ENCODE measurements at regions of chr5 and their contacts with region 1.

Region 1: DNA sequence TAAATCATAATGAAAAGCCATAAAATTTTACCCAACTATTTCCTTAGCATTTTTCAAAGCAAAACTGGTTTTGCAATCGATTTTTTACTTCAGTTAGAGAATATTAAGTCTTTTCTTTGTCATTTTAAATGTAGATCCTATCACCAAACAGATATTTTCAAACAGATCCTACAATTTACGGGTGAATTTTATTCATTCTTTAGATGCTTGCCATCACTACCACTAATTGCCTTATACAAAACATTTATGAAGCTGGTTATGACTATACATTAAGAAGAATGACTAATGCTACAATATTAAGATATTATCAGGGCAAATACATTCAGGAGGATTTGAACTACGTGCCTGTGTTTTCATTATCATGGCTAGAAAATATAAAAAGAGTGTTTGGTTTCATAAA is 196.9 kb downstream of the CWC27 start:
- DNase-seq: no peak
- ATAC-seq: no peak
- H3K4me3 ChIP-seq: no peak overlapping the region
- H3K27ac ChIP-seq: no peak overlapping the region
- H3K4me1 ChIP-seq: no peaks in the 10 kb centered on the region
- H3K27me3 ChIP-seq: no peaks in the 10 kb centered on the region
- CTCF ChIP-seq: no peak
- POLR2A ChIP-seq: no peak

Region 2: DNA sequence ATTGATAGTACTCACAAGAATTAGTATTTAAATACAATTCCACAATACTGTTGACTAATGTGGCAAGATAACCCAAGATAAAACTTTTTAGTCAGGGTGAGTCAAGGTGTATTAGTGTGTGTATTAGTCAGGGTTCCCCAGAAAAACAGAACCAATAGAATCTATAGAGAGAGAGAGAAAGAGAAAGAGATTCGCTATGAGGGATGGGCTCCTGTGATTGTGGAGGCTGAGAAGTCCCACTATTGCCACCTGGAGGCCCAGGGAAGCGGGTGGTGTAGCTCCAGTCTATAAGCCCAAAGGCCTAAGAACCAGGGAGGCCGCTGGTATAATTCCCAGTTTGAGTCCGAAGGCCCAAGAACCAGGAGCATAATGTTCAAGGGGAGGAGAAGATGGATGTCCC is 285.3 kb before region 1 on chr5:
- intact Hi-C with region 1: no loop called
- DNase-seq: no peak
- ATAC-seq: no peak
- H3K4me3 ChIP-seq: no peak overlapping the region
- H3K27ac ChIP-seq: no peak overlapping the region
- H3K4me1 ChIP-seq: no peaks in the 10 kb centered on the region
- H3K27me3 ChIP-seq: peaks cover 0 to 3% (median 0%) of the 10 kb centered on the region in 9 donors
- CTCF ChIP-seq: no peak
- POLR2A ChIP-seq: no peak

Region 3: GRCh38 chr5:64794053-64794770 is 171.4 kb before region 1 on chr5:
- intact Hi-C with region 1: no loop called
- DNase-seq: no peak
- ATAC-seq: peak in 1 of 4 donors; percentile 45
- H3K4me3 ChIP-seq: no peak overlapping the region
- H3K27ac ChIP-seq: peak overlapping the region in 2 of 12 donors; percentile 10 to 42
- H3K4me1 ChIP-seq: peaks cover 0 to 9% (median 0%) of the 10 kb centered on the region in 12 donors
- H3K27me3 ChIP-seq: no peaks in the 10 kb centered on the region
- CTCF ChIP-seq: no peak
- POLR2A ChIP-seq: no peak

Region 4: GRCh38 chr5:65066385-65067146 is 101.0 kb after region 1 on chr5:
- intact Hi-C with region 1: loop called in 1 of 10 experiments (anchors 10 kb)
- DNase-seq: no peak
- ATAC-seq: peak in 1 of 4 donors; percentile 49
- H3K4me3 ChIP-seq: no peak overlapping the region
- H3K27ac ChIP-seq: no peak overlapping the region
- H3K4me1 ChIP-seq: peaks cover 0 to 27% (median 15%) of the 10 kb centered on the region in 12 donors
- H3K27me3 ChIP-seq: no peaks in the 10 kb centered on the region
- CTCF ChIP-seq: no peak
- POLR2A ChIP-seq: no peak

Region 5: DNA sequence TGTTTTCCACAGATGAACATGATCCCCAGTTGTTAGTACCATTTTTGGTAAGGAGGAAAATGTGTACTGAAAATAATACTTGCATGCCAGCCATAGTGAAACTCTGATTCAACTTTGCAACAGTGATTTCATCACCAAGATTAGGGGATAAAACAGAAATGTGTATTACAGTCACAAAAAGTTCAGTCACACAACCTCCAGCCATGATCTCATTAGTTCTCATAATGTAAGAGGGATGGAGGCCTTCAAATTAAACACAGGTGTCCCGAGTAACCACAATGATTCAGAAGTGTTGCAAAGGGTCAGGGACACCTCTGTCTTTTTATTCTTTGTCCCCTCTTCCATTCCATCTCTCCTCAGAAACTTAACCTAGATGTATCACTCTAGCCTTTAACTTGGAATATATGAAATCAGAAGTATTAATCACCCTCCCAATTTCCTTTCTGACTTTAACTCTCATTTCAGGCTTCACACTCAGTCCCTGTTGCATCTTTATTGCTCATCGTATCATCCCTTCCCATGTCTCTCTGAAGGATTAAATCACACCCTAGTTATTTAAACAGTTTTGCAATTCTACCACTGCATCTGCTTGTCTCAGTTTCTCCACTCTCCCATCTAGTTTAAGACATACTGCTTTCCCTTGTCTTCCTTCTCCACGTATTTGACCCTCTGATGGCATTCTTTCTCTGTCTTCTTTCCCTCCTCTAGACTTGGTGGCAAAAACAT is 224.9 kb after region 1 on chr5:
- intact Hi-C with region 1: loop called in 1 of 10 experiments (anchors 5 kb)
- DNase-seq: no peak
- ATAC-seq: peak in 2 of 4 donors; percentile 29 to 84
- H3K4me3 ChIP-seq: no peak overlapping the region
- H3K27ac ChIP-seq: no peak overlapping the region
- H3K4me1 ChIP-seq: no peaks in the 10 kb centered on the region
- H3K27me3 ChIP-seq: no peaks in the 10 kb centered on the region
- CTCF ChIP-seq: no peak
- POLR2A ChIP-seq: no peak

Region 6: DNA sequence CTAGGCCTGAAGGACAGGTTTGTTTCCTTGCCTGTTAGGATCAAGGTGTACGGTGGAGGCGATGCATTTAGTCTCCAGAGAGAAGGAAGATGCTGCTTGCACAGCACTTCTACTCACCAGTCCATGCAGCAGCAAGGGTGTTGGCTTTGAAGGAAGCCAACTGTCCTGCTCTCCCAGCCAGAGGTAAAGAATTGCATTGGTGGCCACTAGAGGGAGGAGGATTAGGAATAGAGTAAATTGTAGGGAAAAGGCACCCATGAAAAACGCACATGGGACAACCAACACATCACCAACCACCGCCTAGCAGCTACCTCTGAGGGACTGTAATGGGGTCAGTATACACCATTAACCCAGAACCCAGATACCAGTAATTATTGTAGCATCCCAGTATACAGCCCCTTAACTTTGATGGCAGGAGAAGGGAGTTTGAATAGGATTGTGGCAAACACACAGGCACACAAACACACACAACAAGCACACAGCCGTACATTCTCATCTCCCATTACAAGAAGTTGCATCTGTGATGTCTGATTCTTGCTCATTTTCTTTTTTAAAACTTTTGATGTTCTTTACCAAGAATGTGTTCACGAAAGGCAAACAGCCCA is 248.4 kb after region 1 on chr5:
- intact Hi-C with region 1: loop called in 1 of 10 experiments (anchors 5 kb)
- DNase-seq: peak in 1 of 5 donors; percentile 6
- ATAC-seq: peak in 3 of 4 donors; percentile 48 to 70 (median 52)
- H3K4me3 ChIP-seq: no peak overlapping the region
- H3K27ac ChIP-seq: no peak overlapping the region
- H3K4me1 ChIP-seq: no peaks in the 10 kb centered on the region
- H3K27me3 ChIP-seq: no peaks in the 10 kb centered on the region
- CTCF ChIP-seq: peak in 11 of 12 donors; percentile 32 to 60 (median 39)
- POLR2A ChIP-seq: no peak